ENCODE measurements at regions of chr17 and their contacts with region 1.

Region 1: DNA sequence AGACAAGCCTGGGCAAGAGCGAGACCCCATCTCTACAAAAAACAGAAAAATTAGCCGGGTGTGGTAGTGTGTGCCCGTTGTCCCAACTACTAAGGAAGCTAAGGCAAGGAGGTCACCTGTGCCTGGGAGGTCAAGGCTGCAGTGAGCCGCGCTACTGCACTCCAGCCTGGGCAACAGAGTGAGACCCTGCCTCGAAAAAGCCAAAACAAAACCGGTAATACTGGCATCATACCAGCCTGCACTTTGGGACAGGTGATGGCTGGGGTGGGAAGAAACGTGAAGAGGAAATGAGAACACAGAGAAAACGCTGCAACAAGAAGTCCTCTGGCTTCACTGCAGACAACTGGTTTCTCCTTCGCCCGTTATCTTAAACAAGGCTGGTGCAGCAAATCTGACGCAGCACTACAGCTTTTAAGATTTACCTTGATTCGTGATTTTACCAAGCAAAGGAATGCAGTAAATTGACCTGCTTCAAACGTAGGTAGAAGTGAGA is 725 bp upstream of the CASC3 start:
- DNase-seq: peak; percentile 72
- H3K4me3 Mint-ChIP-seq: peak overlapping the region; percentile 98
- H3K27ac Mint-ChIP-seq: peak overlapping the region; percentile 98
- H3K4me1 Mint-ChIP-seq: peaks cover 45% of the 10 kb centered on the region
- H3K27me3 Mint-ChIP-seq: no peaks in the 10 kb centered on the region
- CTCF ChIP-seq: no peak

Region 2: GRCh38 chr17:40068917-40069750 is 70.5 kb before region 1 on chr17:
- CTCF ChIA-PET with region 1: interaction called, 27 read pairs
- intact Hi-C with region 1: no loop called
- DNase-seq: peak; percentile 71
- H3K4me3 Mint-ChIP-seq: peak overlapping the region; percentile 63
- H3K27ac Mint-ChIP-seq: no peak overlapping the region
- H3K4me1 Mint-ChIP-seq: peaks cover 94% of the 10 kb centered on the region
- H3K27me3 Mint-ChIP-seq: no peaks in the 10 kb centered on the region
- CTCF ChIP-seq: no peak

Region 3: DNA sequence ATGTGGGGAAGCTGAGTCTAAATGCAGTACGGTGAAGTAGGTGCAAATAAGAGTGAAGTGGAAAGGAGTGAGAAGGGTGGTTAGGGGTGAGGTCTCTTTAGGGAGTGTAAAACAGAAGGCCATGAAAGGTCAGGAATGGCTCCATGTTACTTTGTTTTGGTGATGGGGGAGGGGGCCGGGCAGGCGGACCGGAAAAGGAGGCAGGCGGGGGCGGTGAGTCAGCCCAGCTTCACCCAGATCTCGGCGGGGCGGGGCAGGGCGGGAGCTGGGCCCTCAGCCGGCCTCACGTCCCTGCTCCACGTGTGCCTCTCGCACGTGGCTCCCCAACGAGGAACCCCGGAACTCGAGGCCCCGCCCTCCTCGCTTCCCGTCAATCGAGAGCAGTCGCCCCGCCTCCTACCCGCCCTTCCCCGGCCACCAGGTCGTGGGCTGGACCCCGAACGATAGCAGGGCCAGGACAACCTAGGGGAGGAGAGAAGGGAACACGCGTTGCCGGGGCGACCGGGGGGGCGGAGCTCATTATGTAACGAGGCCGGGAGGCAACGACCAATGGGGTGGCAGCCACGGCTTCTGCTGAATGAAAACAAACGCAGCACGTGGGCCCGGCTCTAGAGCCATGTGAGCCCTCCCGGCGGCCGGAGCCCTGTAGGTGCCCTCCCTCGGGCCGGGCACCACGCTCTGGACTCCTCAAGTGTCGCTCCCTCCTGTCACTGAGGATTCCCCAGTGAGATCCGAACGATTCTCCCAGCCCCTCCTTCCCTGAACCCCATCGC is 40.6 kb before region 1 on chr17:
- CTCF ChIA-PET with region 1: interaction called, 43 read pairs
- intact Hi-C with region 1: no loop called
- DNase-seq: peak; percentile 100
- H3K4me3 Mint-ChIP-seq: peak overlapping the region; percentile 80
- H3K27ac Mint-ChIP-seq: peak overlapping the region; percentile 85
- H3K4me1 Mint-ChIP-seq: peaks cover 73% of the 10 kb centered on the region
- H3K27me3 Mint-ChIP-seq: no peaks in the 10 kb centered on the region
- CTCF ChIP-seq: no peak

Region 4: DNA sequence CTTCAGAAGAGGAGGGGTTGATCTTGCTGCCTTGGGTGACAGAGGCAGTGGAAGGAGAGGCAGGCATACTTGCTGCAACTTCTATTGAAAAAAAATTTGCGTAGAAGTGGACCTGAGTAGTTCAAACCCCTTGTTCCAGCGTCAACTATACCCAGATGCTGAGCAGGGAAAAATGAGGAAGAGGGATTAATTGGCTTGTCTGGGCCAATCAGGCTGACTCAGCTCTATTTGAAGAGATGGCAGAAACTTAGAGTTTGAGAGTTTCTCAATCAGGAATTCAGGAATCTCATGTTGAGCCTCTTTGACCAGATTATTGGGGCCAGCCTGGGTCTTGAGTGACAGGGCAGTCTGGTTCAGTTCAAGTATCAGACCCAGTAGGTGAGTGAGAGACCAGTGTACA is 18.4 kb after region 1 on chr17:
- CTCF ChIA-PET with region 1: interaction called, 39 read pairs
- intact Hi-C with region 1: no loop called
- DNase-seq: no peak
- H3K4me3 Mint-ChIP-seq: no peak overlapping the region
- H3K27ac Mint-ChIP-seq: no peak overlapping the region
- H3K4me1 Mint-ChIP-seq: no peaks in the 10 kb centered on the region
- H3K27me3 Mint-ChIP-seq: no peaks in the 10 kb centered on the region
- CTCF ChIP-seq: no peak

Region 5: GRCh38 chr17:40371261-40371929 is 231.8 kb after region 1 on chr17:
- CTCF ChIA-PET with region 1: interaction called, 16 read pairs
- intact Hi-C with region 1: no loop called
- DNase-seq: no peak
- H3K4me3 Mint-ChIP-seq: no peak overlapping the region
- H3K27ac Mint-ChIP-seq: no peak overlapping the region
- H3K4me1 Mint-ChIP-seq: peaks cover 25% of the 10 kb centered on the region
- H3K27me3 Mint-ChIP-seq: no peaks in the 10 kb centered on the region
- CTCF ChIP-seq: no peak

Measured in Calu3 (cell line).